ENCODE measurements at regions of chr2 and their contacts with region 1.

Region 1: DNA sequence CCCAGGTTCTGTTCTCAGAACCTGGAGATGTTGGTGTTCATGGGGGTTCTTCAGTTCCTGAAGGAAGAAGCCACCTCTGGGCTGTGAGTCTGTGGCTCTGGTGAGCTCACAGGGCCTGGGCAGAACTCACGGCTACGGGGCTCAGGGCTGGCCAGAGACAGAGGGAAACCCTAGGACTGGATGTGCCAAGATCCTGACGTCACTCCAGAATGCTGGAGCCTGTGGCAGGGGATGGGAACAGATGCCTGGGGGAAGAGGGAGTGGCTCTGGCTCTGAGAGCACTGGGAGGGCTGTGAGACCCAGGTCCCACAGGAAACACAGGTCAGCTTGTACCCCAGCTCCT is at the start of gene OTOF:
- DNase-seq: peak; percentile 47
- ATAC-seq: peak; percentile 49
- H3K4me3 Mint-ChIP-seq: peak within 1 kb of the TSS; percentile 89
- H3K27ac Mint-ChIP-seq: peak within 1 kb of the TSS; percentile 92
- H3K4me1 Mint-ChIP-seq: peaks cover 9% of the 10 kb centered on the region
- H3K27me3 Mint-ChIP-seq: no peaks in the 10 kb centered on the region
- total RNA-seq, gene OTOF: 58.0 to 59.9 TPM

Region 2: DNA sequence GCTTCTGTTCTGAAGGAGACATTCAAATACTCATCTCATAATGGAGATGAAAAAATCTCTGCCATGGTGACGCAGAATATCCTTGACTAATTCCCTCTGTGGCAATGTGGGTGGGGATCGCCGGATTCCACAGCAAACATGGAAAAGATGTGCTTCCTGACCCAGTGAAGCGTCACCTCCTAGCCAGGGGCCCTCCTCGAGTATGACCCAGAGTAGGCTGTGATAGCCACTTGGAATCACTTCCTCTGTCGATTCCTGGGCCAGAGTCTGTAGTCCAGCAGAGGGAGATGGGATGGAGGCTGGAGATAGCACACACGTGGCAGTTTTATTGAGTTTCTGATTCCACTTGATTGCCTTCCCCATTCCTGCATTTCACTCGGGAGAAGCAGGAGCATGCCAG is 39.4 kb before region 1 on chr2:
- POLR2A ChIA-PET with region 1: no interaction called
- DNase-seq: no peak
- ATAC-seq: no peak
- H3K4me3 Mint-ChIP-seq: no peak overlapping the region
- H3K27ac Mint-ChIP-seq: no peak overlapping the region
- H3K4me1 Mint-ChIP-seq: peaks cover 4% of the 10 kb centered on the region
- H3K27me3 Mint-ChIP-seq: peaks cover 20% of the 10 kb centered on the region

Region 3: DNA sequence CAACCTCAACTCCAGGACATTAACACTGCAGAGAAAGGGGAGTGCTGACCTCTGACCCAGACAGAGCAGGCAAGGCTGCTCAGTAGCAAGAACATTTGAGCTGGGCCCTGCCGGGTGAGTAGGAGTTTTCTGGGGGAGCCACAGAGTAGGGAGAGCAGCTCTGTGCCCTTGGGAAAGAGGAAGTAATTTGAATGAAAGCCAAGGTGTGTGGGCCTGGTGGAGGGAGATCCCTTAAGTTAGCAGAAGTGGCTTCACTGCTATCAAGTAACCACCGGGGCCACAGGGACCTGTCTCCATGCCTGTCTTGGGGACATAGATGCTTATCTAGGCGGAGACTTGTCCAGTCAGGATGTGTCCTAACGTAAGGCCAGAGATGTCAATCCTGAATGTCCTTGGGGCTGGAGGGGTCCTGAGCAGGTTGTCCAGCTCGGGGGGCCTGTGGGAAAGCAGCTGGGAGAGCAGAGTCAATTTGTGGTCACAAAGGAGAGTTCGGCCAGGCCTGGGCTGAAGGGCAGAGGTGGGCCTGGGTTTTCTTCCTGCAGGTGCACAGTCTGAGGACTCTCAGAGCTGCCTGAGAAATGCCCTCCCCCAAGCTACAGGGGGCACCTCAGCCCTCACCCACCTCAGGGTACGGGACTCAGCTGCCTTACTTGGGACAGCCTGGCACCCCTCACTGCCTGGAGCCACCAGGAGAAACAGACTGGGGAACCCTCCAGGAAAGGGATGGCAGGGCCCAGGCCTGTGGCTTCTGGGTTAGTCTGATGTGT is 15.1 kb after region 1 on chr2:
- POLR2A ChIA-PET with region 1: interaction called, 20 read pairs
- DNase-seq: no peak
- ATAC-seq: no peak
- H3K4me3 Mint-ChIP-seq: peak overlapping the region; percentile 67
- H3K27ac Mint-ChIP-seq: no peak overlapping the region
- H3K4me1 Mint-ChIP-seq: peaks cover 14% of the 10 kb centered on the region
- H3K27me3 Mint-ChIP-seq: no peaks in the 10 kb centered on the region

Region 4: DNA sequence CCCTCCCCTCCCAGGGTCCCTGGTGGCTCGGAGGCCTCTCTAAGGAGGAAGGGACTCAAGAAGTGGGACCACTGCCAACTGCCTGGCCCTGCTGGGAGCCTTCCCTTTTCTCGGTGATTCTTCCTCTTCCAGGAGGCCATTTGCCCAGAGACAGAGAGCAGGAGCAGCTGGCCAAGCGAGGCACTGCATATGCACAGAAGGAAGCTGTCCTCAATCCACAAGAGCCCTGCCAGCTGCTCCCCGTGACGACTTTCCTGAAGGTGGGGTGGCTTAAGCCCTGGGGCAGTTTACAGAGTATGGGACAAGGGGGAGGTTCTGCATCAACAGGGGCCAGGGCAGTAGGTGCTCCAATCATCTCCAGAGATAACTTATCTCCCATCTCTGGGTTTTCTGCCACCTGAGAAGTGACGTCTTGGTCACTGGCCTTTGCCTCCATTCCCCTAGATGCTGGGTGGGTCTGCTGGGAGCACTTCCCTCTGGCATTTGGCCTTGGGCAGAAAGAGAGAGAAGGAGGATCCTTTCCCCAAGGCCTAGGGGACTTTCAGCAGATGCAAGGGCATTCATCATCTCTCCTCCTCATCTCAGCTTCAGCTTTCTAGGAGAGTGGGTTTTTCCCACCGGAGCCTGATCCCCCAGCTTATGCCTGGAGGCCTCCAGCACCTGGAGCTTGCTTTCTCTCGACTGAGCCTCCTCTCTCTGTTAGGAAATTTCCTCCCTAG is 134.8 kb after region 1 on chr2:
- POLR2A ChIA-PET with region 1: no interaction called
- DNase-seq: no peak
- ATAC-seq: no peak
- H3K4me3 Mint-ChIP-seq: no peak overlapping the region
- H3K27ac Mint-ChIP-seq: no peak overlapping the region
- H3K4me1 Mint-ChIP-seq: peaks cover 15% of the 10 kb centered on the region
- H3K27me3 Mint-ChIP-seq: peaks cover 2% of the 10 kb centered on the region

Measured in activated naive CD8-positive, alpha-beta T cell treated with anti-CD3 and anti-CD28 coated beads, Interleukin-2, amount 10 ng/mL, durations not matched to agents 7 days and 5 days (primary cell).